IMR-90 (cell line): ENCODE measurements at regions of chr11 and their contacts with region 1.

Region 1: GRCh38 chr11:36469063-36469462 is 41.0 kb downstream of the TRAF6 start:
- DNase-seq: no peak
- ATAC-seq: no peak
- H3K4me3 ChIP-seq: no peak overlapping the region
- H3K27ac ChIP-seq: no peak overlapping the region
- H3K4me1 ChIP-seq: peaks cover 9% of the 10 kb centered on the region
- H3K27me3 ChIP-seq: no peaks in the 10 kb centered on the region
- CTCF ChIP-seq: peak; percentile 34
- POLR2A ChIP-seq: no peak
- RAD21 ChIP-seq: no peak

Region 2: DNA sequence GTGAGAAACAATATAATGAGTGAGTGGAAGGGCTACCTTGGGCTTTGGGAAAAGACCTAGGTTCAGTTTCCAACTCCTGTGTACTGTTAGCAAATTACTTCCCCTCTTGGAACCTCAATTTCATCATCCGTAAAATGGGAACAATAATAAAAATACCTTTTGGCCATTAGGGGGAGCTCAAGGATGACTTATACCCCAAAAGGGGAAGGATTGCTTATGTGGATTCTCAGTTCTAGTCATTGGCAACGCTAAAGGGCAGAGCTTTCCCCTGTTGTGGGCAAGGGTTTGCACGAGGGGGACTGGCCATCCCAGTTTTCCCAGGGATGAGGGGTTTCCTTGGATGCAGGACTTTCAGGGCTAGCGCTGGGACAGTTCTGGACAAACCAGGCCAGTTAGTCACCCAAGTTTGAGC is 176.7 kb before region 1 on chr11:
- CTCF ChIA-PET with region 1: interaction called, 4 read pairs
- POLR2A ChIA-PET with region 1: interaction called, 6 read pairs
- dilution Hi-C with region 1: no loop called
- in situ Hi-C with region 1: loop called (anchors 5 kb)
- intact Hi-C with region 1: no loop called
- DNase-seq: peak; percentile 47
- ATAC-seq: peak; percentile 47; the same call in 1 of the 2 replicates
- H3K4me3 ChIP-seq: no peak overlapping the region
- H3K27ac ChIP-seq: no peak overlapping the region
- H3K4me1 ChIP-seq: 0 out of 2 replicates have a peak, but pooled peaks cover 2% of the 10 kb centered on the region
- H3K27me3 ChIP-seq: no peaks in the 10 kb centered on the region
- CTCF ChIP-seq: peak; percentile 78
- POLR2A ChIP-seq: no peak
- RAD21 ChIP-seq: peak; percentile 87

Region 3: DNA sequence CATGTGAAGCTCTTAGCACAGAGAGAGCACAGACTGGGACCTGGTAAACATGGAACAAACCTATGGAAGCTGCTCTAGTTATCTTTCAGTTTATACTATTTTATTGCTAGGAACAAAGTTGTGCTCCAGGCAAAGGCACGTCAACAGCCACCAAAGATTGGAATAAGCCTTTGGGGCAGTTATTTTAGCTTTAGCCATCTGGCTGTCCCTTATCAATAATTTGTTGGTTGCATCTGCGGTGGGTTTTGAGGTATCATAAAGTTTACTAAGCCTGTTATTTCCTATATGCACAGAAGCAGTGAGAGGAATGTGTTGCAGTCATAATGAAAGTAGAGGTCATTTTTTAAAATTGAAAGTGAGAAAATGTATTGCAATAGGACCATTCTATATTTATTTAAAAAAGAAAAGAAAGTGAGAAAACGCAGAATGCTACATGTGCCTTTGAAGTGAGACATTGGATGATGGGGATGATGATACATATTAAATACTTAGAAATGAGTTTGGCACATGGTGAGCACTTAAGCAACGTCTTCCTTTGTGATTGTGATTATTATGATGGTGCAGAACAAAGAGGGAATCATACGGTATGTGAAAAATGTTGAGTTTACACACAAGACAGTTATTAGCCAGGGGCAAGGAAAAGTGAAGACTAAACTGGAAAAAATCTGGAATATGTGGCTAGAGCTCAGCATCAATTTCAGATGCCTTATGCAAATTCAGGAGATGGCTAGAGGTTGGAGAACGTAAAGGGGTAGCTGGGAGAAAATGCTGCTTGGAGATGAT is 114.7 kb before region 1 on chr11:
- CTCF ChIA-PET with region 1: no interaction called
- POLR2A ChIA-PET with region 1: no interaction called
- dilution Hi-C with region 1: no loop called
- in situ Hi-C with region 1: no loop called
- intact Hi-C with region 1: no loop called
- DNase-seq: peak; percentile 67
- ATAC-seq: peak; percentile 84
- H3K4me3 ChIP-seq: no peak overlapping the region
- H3K27ac ChIP-seq: no peak overlapping the region
- H3K4me1 ChIP-seq: peaks cover 5% of the 10 kb centered on the region; the same call in 1 of the 2 replicates
- H3K27me3 ChIP-seq: peaks cover 5% of the 10 kb centered on the region; the same call in 1 of the 2 replicates
- CTCF ChIP-seq: no peak
- POLR2A ChIP-seq: no peak
- RAD21 ChIP-seq: no peak

Region 4: DNA sequence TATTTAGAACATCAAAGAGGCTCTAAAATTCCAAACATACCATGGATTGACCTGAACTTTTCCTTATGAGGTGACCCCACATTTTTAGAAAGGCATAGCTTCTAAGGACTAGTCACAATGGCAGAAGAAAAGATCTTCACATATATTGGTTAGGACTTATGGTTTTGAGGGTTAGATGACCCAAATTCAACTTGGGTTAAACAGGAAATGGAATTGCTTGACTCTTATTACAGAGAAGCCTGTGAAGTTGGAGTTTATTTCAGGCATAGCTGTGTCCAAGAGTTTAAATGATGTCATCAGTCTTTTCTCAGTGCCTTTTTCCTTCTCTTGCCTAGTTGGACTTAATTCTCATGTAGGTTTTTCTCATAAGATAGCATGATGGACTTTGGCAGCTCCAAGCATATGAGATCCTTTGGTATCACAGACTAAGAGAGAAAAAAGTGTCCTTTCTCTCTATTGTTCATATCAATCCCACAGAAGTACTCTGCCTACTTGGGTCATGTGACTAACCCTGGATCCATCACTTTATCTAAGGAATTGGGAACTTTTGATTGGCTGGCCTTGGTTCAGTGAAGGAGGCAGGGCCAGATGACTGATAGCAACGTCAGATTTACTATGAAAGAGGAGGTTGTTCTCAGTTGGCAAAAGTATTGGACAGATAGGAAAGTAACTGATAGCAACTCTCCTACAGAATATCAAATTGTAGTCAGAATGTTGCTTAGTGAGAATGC is 81.5 kb after region 1 on chr11:
- CTCF ChIA-PET with region 1: no interaction called
- POLR2A ChIA-PET with region 1: no interaction called
- dilution Hi-C with region 1: no loop called
- in situ Hi-C with region 1: no loop called
- intact Hi-C with region 1: no loop called
- DNase-seq: no peak
- ATAC-seq: no peak
- H3K4me3 ChIP-seq: no peak overlapping the region
- H3K27ac ChIP-seq: no peak overlapping the region
- H3K4me1 ChIP-seq: no peaks in the 10 kb centered on the region
- H3K27me3 ChIP-seq: no peaks in the 10 kb centered on the region
- CTCF ChIP-seq: no peak
- POLR2A ChIP-seq: no peak
- RAD21 ChIP-seq: no peak

Region 5: GRCh38 chr11:37002831-37003230 is 533.8 kb after region 1 on chr11:
- CTCF ChIA-PET with region 1: no interaction called
- POLR2A ChIA-PET with region 1: no interaction called
- dilution Hi-C with region 1: no loop called
- in situ Hi-C with region 1: no loop called
- intact Hi-C with region 1: no loop called
- DNase-seq: no peak
- ATAC-seq: no peak
- H3K4me3 ChIP-seq: no peak overlapping the region
- H3K27ac ChIP-seq: no peak overlapping the region
- H3K4me1 ChIP-seq: no peaks in the 10 kb centered on the region
- H3K27me3 ChIP-seq: no peaks in the 10 kb centered on the region
- CTCF ChIP-seq: no peak
- POLR2A ChIP-seq: no peak
- RAD21 ChIP-seq: no peak